Activated naive CD8-positive, alpha-beta T cell treated with anti-CD3 and anti-CD28 coated beads, Interleukin-2, amount 10 ng/mL, durations not matched to agents 7 days and 5 days (primary cell): ENCODE measurements at regions of chr5 and their contacts with region 1.

Region 1: GRCh38 chr5:142356716-142357473 is 32.1 kb upstream of the SPRY4 start:
- DNase-seq: peak; percentile 91
- ATAC-seq: peak; percentile 87
- H3K4me3 Mint-ChIP-seq: peak overlapping the region; percentile 83
- H3K27ac Mint-ChIP-seq: peak overlapping the region; percentile 92
- H3K4me1 Mint-ChIP-seq: peaks cover 29% of the 10 kb centered on the region
- H3K27me3 Mint-ChIP-seq: peaks cover 15% of the 10 kb centered on the region

Region 2: DNA sequence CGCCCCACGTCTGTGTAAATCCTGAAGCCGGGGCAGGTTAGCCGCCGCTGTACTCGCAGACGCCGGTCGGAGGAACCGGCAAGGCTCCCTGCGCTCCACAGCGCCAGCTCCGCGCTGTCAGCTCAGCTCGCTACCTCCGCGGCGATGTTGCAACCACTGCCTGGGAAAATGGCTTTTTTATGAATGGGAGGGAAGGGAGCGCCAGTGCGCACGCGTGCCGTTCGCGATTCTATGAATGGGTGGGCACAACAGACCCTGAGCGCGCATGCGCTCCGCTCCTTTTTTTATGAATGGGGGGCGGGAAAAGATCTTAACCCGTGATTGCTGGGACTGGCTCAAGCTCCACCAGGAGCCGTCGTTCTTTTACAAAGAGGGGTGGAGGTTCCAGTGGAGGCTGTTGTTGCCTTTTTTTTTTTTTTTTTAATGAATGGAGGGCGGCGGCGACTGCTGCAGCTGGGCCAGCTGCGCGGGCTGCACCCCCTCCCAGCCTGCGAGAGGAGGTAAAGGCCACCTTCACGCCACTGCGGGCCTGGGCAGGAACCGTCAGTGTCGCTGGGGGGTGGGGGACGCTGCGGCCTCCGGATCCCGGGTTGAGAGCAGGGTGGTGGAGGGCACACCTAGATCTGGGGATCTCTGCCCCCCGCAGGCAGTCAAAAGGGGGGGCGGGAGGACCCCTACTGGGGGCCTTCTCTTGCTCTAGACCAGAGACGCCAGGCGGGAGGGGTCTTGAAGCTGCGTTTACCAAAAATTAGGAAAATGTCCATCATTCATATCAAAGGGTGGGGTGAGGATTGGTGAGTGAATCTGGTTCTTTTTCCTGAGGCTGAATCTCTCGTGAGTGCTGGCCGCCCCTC is 31.8 kb before region 1 on chr5 and contains the start of gene SPRY4:
- POLR2A ChIA-PET with region 1: interaction called, 22 read pairs
- DNase-seq: peak; percentile 91
- ATAC-seq: peak; percentile 86
- H3K4me3 Mint-ChIP-seq: peak within 1 kb of the TSS; percentile 89
- H3K27ac Mint-ChIP-seq: peak within 1 kb of the TSS; percentile 83
- H3K4me1 Mint-ChIP-seq: peaks cover 26% of the 10 kb centered on the region
- H3K27me3 Mint-ChIP-seq: peaks cover 43% of the 10 kb centered on the region
- total RNA-seq, gene SPRY4: 0.96 to 1.7 TPM

Region 3: GRCh38 chr5:142342128-142342981 is 14.5 kb before region 1 on chr5:
- POLR2A ChIA-PET with region 1: interaction called, 10 read pairs
- DNase-seq: no peak
- ATAC-seq: no peak
- H3K4me3 Mint-ChIP-seq: no peak overlapping the region
- H3K27ac Mint-ChIP-seq: no peak overlapping the region
- H3K4me1 Mint-ChIP-seq: peaks cover 2% of the 10 kb centered on the region
- H3K27me3 Mint-ChIP-seq: peaks cover 2% of the 10 kb centered on the region

Region 4: GRCh38 chr5:142422429-142422828 is 65.5 kb after region 1 on chr5:
- POLR2A ChIA-PET with region 1: interaction called, 26 read pairs
- DNase-seq: no peak
- ATAC-seq: no peak
- H3K4me3 Mint-ChIP-seq: no peak overlapping the region
- H3K27ac Mint-ChIP-seq: no peak overlapping the region
- H3K4me1 Mint-ChIP-seq: peaks cover 40% of the 10 kb centered on the region
- H3K27me3 Mint-ChIP-seq: peaks cover under 1% of the 10 kb centered on the region

Region 5: GRCh38 chr5:142432369-142432863 is 75.5 kb after region 1 on chr5:
- POLR2A ChIA-PET with region 1: interaction called, 21 read pairs
- DNase-seq: peak; percentile 65
- ATAC-seq: peak; percentile 77
- H3K4me3 Mint-ChIP-seq: peak overlapping the region; percentile 68
- H3K27ac Mint-ChIP-seq: peak overlapping the region; percentile 90
- H3K4me1 Mint-ChIP-seq: peaks cover 37% of the 10 kb centered on the region
- H3K27me3 Mint-ChIP-seq: peaks cover 3% of the 10 kb centered on the region